ENCODE measurements at regions of chr13 and their contacts with region 1.

Region 1: DNA sequence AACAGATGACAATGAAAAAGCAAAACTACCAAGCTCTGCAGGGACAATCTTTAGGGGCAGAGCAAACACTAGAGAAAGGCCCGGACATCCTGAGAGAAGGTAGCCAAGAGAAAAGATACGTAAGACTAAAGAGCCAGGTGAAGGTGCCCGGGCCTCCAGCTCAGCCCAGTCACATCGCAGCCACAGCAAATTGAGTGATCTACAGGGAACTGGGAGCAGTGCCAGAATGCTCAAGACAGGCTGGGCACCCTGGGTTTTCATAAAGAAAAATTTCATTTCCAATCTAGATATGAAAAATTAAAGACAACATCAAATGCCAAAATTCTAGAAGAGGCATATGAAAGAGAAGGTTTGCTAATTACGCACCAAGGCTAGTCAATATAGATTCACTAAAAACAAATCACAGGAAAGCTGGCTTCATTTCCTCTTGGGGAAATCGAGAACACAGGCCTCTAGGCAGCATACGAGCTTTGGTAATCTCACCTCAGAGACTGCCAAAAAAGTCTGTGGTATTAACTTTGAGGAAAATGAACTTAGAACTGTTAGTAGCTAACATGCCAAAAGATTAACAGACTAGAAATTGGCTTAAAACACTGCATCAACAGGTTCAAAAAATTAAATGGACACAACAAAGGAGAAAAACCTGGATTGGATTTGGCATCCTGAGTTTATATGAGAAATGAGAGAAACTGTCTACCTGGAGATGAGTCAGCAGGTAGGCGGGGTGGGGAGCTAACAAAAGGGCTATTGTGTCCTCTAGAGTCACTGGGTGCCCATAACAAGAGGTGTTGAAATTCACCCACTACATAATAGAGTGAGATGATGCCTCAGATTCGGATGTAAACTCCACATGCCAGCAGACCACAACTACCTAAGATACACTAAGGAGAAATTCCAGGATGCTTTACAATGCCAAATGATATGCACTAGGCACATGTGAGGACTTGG is 6.6 kb downstream of the ANKRD10 start:
- DNase-seq: peak; percentile 94
- ATAC-seq: peak; percentile 91
- H3K4me3 ChIP-seq: no peak overlapping the region
- H3K27ac ChIP-seq: peak overlapping the region; percentile 73
- H3K4me1 ChIP-seq: peaks cover 57% of the 10 kb centered on the region
- H3K27me3 ChIP-seq: no peaks in the 10 kb centered on the region
- CTCF ChIP-seq: no peak; the same call in 1 of the 2 replicates
- EP300 ChIP-seq: peak in 1 of 2 experiments; percentile 39; a peak in 2 of 4 replicates
- POLR2A ChIP-seq: no peak; a peak in 1 of 4 replicates
- RAD21 ChIP-seq: no peak

Region 2: DNA sequence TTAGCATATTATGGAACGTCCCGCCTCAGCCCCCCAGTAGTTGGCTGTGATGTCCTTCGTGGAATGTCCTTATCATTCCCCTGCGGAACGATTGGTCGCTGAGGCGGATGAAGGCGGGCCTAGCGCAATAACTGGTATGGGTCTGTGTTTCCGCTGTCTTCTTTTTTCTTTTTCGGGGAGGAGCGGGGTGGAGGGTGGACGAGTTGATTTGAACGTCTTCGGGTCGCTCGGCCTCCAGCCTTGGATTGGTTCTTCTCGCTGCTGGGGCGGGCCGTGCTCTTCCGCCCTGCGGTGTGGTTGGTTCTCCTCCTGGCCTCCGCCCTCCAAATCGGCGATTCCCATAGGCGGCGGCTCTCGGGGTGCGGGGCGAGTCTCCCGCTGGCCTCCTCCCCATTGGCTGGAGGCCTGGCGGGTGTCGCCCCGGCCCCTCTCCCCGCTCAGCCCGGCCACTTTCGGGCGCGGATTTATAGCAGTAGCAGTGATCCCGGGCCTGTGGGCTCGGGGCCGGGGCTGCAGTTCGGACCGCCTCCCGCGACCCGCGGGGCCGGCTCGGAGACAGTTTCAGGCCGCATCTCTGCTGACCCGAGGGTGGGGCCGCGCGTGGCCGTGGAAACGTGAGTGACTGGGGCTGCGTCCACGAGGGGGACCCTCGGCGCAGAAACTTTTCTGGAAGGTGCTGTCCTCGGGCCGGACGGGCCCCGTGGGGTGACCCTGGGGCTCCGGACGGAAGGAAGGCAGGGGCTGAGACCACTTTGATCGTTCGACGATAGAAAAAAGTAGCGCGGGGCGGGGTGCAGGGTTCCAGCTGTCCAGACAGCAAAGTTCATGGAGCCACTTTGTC is 192.6 kb before region 1 on chr13:
- CTCF ChIA-PET with region 1: no interaction called
- POLR2A ChIA-PET with region 1: interaction called, 6 read pairs
- in situ Hi-C with region 1: no loop called
- intact Hi-C with region 1: loop called (anchors 1 kb)
- DNase-seq: peak; percentile 99
- ATAC-seq: peak; percentile 75
- H3K4me3 ChIP-seq: peak overlapping the region; percentile 76 to 98 (median 96)
- H3K27ac ChIP-seq: peak overlapping the region; percentile 89
- H3K4me1 ChIP-seq: peaks cover 16% of the 10 kb centered on the region
- H3K27me3 ChIP-seq: no peaks in the 10 kb centered on the region; a peak in 1 of 5 replicates
- CTCF ChIP-seq: peak; percentile 31; the same call in 1 of the 2 replicates
- EP300 ChIP-seq: no peak
- POLR2A ChIP-seq: no peak; a peak in 1 of 4 replicates
- RAD21 ChIP-seq: no peak; the same call in 1 of the 2 replicates

Region 3: GRCh38 chr13:110874508-110874960 is 33.7 kb before region 1 on chr13:
- CTCF ChIA-PET with region 1: no interaction called
- POLR2A ChIA-PET with region 1: interaction called, 11 read pairs
- in situ Hi-C with region 1: no loop called
- intact Hi-C with region 1: loop called (anchors 5 kb)
- DNase-seq: peak; percentile 37
- ATAC-seq: peak; percentile 81
- H3K4me3 ChIP-seq: peak overlapping the region; percentile 47 to 61 (median 60)
- H3K27ac ChIP-seq: no peak overlapping the region
- H3K4me1 ChIP-seq: peaks cover 51% of the 10 kb centered on the region
- H3K27me3 ChIP-seq: peaks cover 0 to 16% of the 10 kb centered on the region in 2 experiments; a peak in 2 of 5 replicates
- CTCF ChIP-seq: no peak
- EP300 ChIP-seq: no peak
- POLR2A ChIP-seq: no peak
- RAD21 ChIP-seq: no peak

Measured in HepG2 (cell line).